ENCODE measurements at regions of chr1 and their contacts with region 1.

Region 1: DNA sequence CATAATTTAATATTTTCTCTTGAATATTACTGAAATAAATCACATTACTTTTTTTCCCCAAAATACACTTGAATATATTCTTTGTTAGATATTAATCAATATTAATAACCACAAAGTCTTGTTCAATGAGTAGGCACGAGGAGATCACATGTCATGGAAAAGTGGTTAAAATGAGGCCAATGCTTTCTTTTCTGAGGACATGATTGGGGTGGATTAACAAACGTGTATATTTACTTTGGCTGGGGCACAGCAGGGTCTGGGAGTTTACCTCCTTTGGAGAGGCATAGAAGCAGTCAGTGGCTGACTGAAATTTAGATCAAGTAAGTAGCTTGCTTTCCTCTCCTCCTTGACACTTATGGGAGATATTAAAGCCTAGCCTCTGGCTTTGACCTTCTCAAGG is 664.3 kb upstream of the B3GALT2 start:
- DNase-seq: no peak
- ATAC-seq: no peak
- H3K4me3 ChIP-seq: no peak overlapping the region
- H3K4me3 Mint-ChIP-seq: no peak overlapping the region
- H3K27ac ChIP-seq: no peak overlapping the region
- H3K27ac Mint-ChIP-seq: no peak overlapping the region
- H3K4me1 ChIP-seq: no peaks in the 10 kb centered on the region
- H3K4me1 Mint-ChIP-seq: no peaks in the 10 kb centered on the region
- H3K27me3 ChIP-seq: no peaks in the 10 kb centered on the region
- H3K27me3 Mint-ChIP-seq: no peaks in the 10 kb centered on the region
- CTCF ChIP-seq: no peak

Region 2: GRCh38 chr1:193368302-193368701 is 482.4 kb before region 1 on chr1:
- CTCF ChIA-PET with region 1: no interaction called
- POLR2A ChIA-PET with region 1: no interaction called
- intact Hi-C with region 1: loop called (anchors 1 kb)
- DNase-seq: peak; percentile 37
- ATAC-seq: peak; percentile 24
- H3K4me3 ChIP-seq: peak overlapping the region in 3 of 5 experiments; percentile 37 to 61 (median 51)
- H3K4me3 Mint-ChIP-seq: peak overlapping the region; percentile 85
- H3K27ac ChIP-seq: peak overlapping the region in 1 of 2 donors; percentile 52
- H3K27ac Mint-ChIP-seq: peak overlapping the region; percentile 70
- H3K4me1 ChIP-seq: peaks cover 0 to 3% of the 10 kb centered on the region in 2 donors
- H3K4me1 Mint-ChIP-seq: peaks cover 8% of the 10 kb centered on the region
- H3K27me3 ChIP-seq: no peaks in the 10 kb centered on the region
- H3K27me3 Mint-ChIP-seq: no peaks in the 10 kb centered on the region
- CTCF ChIP-seq: no peak

Region 3: DNA sequence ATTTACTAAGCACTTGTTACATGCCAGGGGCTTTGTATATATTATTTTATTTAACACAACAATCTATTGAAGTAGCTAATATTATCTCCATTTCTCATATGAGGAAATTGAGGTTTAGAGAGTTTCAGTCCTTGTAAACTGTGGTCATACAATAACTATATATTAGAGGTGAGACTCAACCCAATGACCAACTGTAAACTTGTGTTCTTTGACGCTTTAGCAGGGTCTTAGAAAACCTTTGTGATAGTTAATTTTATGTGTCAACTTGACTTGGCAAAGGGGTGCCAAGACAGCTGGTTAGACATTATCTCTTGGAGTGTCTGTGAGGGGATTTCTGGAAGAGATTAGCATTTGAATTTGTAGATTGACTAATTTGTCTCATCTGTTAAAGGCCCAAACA is 412.0 kb before region 1 on chr1:
- CTCF ChIA-PET with region 1: no interaction called
- POLR2A ChIA-PET with region 1: no interaction called
- intact Hi-C with region 1: no loop called
- DNase-seq: no peak
- ATAC-seq: no peak
- H3K4me3 ChIP-seq: no peak overlapping the region
- H3K4me3 Mint-ChIP-seq: no peak overlapping the region
- H3K27ac ChIP-seq: no peak overlapping the region
- H3K27ac Mint-ChIP-seq: no peak overlapping the region
- H3K4me1 ChIP-seq: peaks cover 0 to 4% of the 10 kb centered on the region in 2 donors
- H3K4me1 Mint-ChIP-seq: peaks cover 5% of the 10 kb centered on the region
- H3K27me3 ChIP-seq: no peaks in the 10 kb centered on the region
- H3K27me3 Mint-ChIP-seq: no peaks in the 10 kb centered on the region
- CTCF ChIP-seq: no peak

Measured in B cell (primary cell).